Dorsolateral prefrontal cortex (tissue), 120 donors: ENCODE measurements at regions of chr4 and their contacts with region 1.

Region 1: DNA sequence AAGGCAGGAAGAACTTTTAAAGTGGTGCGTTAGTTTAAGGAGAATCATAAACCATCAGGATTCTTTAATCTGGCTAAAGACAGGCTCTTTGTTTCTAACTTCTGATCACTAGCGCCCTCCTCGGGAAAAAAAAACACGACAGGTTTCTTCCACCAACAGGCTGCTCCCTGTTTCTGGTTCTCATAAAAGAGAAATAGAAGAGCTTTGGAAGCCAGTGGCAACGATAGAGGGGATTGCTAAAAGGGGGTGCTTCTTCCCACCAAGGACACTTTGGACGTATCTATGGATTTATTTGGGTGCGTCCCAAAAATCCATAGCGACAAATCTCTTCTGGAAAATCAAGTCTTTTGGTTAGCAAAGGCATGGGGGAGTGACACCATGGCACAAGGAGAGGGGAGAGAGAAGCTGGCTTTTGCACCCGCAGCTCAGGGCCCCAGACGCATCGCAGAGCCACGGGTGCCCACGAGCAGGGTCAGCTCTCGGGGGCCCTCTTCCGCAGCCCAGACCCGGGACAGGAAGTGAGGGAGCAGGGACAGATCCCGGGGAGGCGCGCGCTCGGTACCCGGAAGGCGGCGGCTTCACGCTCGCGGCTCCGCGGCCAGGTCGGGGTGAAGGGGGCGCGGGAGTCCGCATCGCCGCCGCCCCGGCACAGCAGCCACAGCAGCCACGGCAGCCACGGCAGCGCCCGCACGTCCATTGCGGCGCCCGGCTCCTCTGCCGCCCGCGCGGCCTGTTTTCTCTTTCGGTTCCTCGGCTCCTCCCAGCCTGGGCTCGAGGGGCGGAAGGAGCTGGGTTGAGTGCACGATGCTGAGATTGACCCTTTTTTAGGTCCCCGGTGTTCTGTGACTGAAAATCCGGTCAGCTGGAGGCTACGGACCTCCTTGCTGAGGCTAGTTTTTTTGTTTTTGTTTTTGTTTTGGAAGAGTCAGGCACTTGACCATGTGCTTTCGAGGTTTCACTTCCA is at the start of gene CTSO:
- DNase-seq: peak; percentile 39 to 84 (median 74)
- H3K4me3 ChIP-seq: peak within 1 kb of the TSS; percentile 54 to 95 (median 81)
- H3K27ac ChIP-seq: peak within 1 kb of the TSS; percentile 90 to 100 (median 99)
- H3K27me3 ChIP-seq: no peaks in the 10 kb centered on the region
- CTCF ChIP-seq: peak; percentile 9 to 82 (median 68)
- total RNA-seq, gene CTSO: 3.4 to 19.4 (median 10.6) TPM

Region 2: DNA sequence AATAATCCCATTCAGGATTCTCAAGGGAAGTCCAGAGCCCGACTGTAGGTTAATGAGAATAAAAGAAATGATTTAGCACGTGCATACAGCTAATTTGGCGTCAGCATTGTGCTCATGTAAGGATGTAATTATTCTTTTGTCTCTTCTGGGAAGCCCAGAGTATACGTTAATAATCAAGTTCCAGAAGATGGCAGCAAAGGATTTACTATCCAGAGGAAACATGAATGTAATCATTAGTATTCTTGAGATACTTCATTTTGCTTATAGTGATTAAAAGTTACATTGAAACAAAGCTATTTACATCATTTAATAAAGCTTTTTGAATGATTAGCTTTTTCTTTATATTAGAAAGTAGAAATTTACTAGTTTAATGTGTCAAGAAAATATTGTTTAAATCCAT is 549.5 kb before region 1 on chr4:
- intact Hi-C with region 1: loop called in 1 of 2 experiments (anchors 5 kb)
- DNase-seq: no peak
- H3K4me3 ChIP-seq: no peak overlapping the region
- H3K27ac ChIP-seq: no peak overlapping the region
- H3K27me3 ChIP-seq: peaks cover 0 to 2% (median 0%) of the 10 kb centered on the region in 45 donors
- CTCF ChIP-seq: peak in 53 of 56 donors; percentile 23 to 79 (median 48)

Region 3: GRCh38 chr4:155442267-155443105 is 510.9 kb before region 1 on chr4:
- intact Hi-C with region 1: loop called in 1 of 2 experiments (anchors 10 kb)
- DNase-seq: peak; percentile 49 to 92 (median 83)
- H3K4me3 ChIP-seq: peak overlapping the region in 28 of 59 donors; percentile 2 to 48 (median 30)
- H3K27ac ChIP-seq: peak overlapping the region in 28 of 59 donors; percentile 4 to 70 (median 44)
- H3K27me3 ChIP-seq: peaks cover 0 to 11% (median 0%) of the 10 kb centered on the region in 45 donors
- CTCF ChIP-seq: peak; percentile 87 to 99 (median 94)

Region 4: GRCh38 chr4:155809835-155810234 is 143.6 kb before region 1 on chr4:
- intact Hi-C with region 1: loop called (anchors 2 to 5 kb)
- DNase-seq: no peak
- H3K4me3 ChIP-seq: peak overlapping the region in 3 of 59 donors; percentile 1 to 24 (median 21)
- H3K27ac ChIP-seq: peak overlapping the region in 2 of 59 donors; percentile 7 to 16
- H3K27me3 ChIP-seq: no peaks in the 10 kb centered on the region
- CTCF ChIP-seq: peak; percentile 45 to 87 (median 70)

Region 5: DNA sequence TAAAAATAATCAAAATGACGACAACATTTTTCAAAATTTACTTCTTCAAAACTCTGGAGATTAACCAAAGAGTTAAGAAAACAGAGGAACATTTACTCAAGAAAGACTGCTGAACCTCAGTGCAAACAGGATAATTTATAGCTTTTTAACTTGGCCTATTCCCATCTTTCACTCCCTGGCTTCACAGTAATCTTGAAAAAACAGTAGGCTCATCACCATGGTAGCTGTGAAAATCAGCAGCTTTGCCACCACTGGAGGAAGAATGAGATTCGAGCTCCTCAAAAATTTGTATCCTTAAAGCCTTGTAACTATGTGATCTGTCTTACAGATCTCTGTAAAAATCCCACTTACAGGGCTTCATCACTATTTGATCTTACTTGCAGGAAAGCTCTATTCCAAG is 447.9 kb after region 1 on chr4:
- intact Hi-C with region 1: no loop called
- DNase-seq: peak in 1 of 10 donors; percentile 18
- H3K4me3 ChIP-seq: no peak overlapping the region
- H3K27ac ChIP-seq: peak overlapping the region in 13 of 59 donors; percentile 7 to 60 (median 32)
- H3K27me3 ChIP-seq: no peaks in the 10 kb centered on the region
- CTCF ChIP-seq: no peak